ENCODE measurements at regions of chr2 and their contacts with region 1.

Region 1: GRCh38 chr2:74147727-74148456 is at the start of gene BOLA3:
- DNase-seq: peak; percentile 96
- H3K4me3 Mint-ChIP-seq: no peak within 1 kb of the TSS
- H3K27ac Mint-ChIP-seq: no peak within 1 kb of the TSS
- H3K4me1 Mint-ChIP-seq: peaks cover 2% of the 10 kb centered on the region
- H3K27me3 Mint-ChIP-seq: no peaks in the 10 kb centered on the region
- total RNA-seq, gene BOLA3: 100 and 103 TPM in 2 replicates

Region 2: GRCh38 chr2:73736855-73737779 is 410.8 kb before region 1 on chr2 and contains the start of gene TPRKB:
- intact Hi-C with region 1: loop called (anchors 10 kb)
- DNase-seq: peak; percentile 98
- H3K4me3 Mint-ChIP-seq: peak within 1 kb of the TSS; percentile 100
- H3K27ac Mint-ChIP-seq: peak within 1 kb of the TSS; percentile 91
- H3K4me1 Mint-ChIP-seq: peaks cover 10% of the 10 kb centered on the region
- H3K27me3 Mint-ChIP-seq: no peaks in the 10 kb centered on the region
- total RNA-seq, gene TPRKB: 37.6 and 38.5 TPM in 2 replicates

Region 3: DNA sequence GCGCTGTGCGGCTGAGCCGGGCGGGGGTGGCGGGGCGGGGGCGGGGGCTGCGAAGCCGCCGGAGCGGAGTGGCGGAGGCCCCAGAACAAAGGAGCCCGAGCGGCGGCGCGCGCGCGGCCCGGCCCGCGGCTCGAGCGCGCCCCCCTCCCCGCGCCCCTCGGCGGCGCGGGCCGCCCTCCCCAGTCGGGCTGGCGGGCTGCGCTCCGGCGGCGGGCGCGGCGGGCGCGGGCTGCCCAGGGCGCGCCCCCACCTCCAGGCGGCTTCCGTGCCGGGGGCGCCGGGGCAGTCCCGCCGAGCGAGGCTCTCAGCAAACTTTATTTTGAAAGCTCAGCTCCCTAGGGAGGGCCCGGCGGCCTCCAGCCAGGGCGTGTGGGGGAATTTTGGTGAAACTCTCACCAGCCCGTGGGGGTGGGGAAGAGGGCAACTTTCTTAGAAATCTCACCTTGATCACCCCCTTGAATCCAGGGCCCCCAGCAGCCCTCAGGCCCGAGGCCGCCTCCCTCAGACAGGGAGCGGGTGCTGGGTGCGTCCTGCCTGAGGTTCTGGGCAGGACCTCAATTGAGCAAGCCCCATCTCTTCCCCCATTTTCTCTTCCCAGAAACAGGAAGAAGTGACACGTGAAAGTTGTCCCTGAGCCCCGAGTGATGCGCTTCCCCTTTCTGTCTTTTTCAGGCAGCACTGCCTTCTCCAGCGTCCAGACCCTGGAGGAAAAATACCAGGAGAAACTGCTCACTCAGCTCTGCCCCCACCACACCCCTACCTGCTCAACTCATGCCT is 162.4 kb before region 1 on chr2:
- intact Hi-C with region 1: loop called (anchors 2 kb)
- DNase-seq: peak; percentile 83
- H3K4me3 Mint-ChIP-seq: peak overlapping the region; percentile 87
- H3K27ac Mint-ChIP-seq: peak overlapping the region; percentile 88
- H3K4me1 Mint-ChIP-seq: peaks cover 73% of the 10 kb centered on the region
- H3K27me3 Mint-ChIP-seq: peaks cover 9% of the 10 kb centered on the region

Region 4: GRCh38 chr2:74119912-74120825 is 27.7 kb before region 1 on chr2:
- intact Hi-C with region 1: loop called (anchors 2 kb)
- DNase-seq: peak; percentile 96
- H3K4me3 Mint-ChIP-seq: peak overlapping the region; percentile 88
- H3K27ac Mint-ChIP-seq: peak overlapping the region; percentile 92
- H3K4me1 Mint-ChIP-seq: peaks cover 9% of the 10 kb centered on the region
- H3K27me3 Mint-ChIP-seq: peaks cover 7% of the 10 kb centered on the region

Region 5: DNA sequence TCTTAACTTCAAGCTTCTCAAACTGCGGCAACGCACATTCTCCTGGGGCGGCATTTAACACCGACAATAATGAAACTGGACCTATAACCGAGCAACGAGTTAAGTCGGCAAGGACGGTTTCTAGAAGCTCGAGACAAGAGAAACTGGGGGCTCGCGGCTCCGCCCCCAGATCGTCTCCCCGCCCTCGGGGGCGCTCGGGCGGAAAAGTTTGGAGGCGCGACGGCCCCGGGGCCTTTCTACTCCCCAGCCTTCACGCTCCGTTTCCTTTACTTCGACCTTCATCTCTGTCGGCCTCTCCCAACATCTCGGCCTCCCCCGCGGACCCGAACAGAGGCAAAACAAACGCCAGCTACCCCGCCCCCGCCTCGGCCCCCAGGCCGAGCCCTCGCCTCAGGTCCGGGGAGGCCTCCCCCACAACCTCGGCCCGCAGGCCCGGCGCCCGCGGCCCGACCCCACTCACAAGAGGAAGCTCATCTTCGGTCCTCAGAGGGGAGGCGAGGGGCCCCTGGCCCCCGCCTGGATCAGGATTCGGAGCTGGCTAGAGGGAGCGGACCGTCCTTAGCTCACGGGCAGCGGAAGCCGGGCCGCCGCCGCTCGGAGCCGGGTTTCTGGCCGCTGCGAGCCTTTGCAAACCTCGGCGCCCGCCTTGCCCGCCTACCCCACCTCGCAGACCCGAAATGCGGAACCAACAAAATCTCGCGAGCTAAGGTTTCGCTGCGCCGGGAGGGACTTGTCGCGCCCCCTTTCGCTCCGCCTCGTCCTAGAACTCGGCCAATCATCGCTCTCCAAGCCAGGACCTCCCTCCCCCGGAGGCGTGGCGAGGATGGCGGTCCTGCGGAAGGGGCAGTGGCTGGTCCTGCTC is 30.5 kb after region 1 on chr2 and contains the start of gene MOB1A:
- intact Hi-C with region 1: loop called (anchors 1 kb)
- DNase-seq: peak; percentile 100
- H3K4me3 Mint-ChIP-seq: peak within 1 kb of the TSS; percentile 84
- H3K27ac Mint-ChIP-seq: peak within 1 kb of the TSS; percentile 90
- H3K4me1 Mint-ChIP-seq: peaks cover 43% of the 10 kb centered on the region
- H3K27me3 Mint-ChIP-seq: no peaks in the 10 kb centered on the region
- total RNA-seq, gene MOB1A: 203 and 204 TPM in 2 replicates

Region 6: GRCh38 chr2:74198461-74199274 is 50.8 kb after region 1 on chr2 and contains the start of gene MTHFD2:
- intact Hi-C with region 1: loop called (anchors 1 kb)
- DNase-seq: peak; percentile 98
- H3K4me3 Mint-ChIP-seq: peak within 1 kb of the TSS; percentile 96
- H3K27ac Mint-ChIP-seq: peak within 1 kb of the TSS; percentile 100
- H3K4me1 Mint-ChIP-seq: peaks cover 38% of the 10 kb centered on the region
- H3K27me3 Mint-ChIP-seq: no peaks in the 10 kb centered on the region
- total RNA-seq, gene MTHFD2: 418 and 439 TPM in 2 replicates

Region 7: GRCh38 chr2:74421221-74421870 is 273.5 kb after region 1 on chr2 and contains the starts of genes C2orf81 and WDR54:
- intact Hi-C with region 1: loop called (anchors 5 kb)
- DNase-seq: peak; percentile 99
- H3K4me3 Mint-ChIP-seq: peak within 1 kb of the TSS; percentile 94
- H3K27ac Mint-ChIP-seq: peak within 1 kb of the TSS; percentile 96
- H3K4me1 Mint-ChIP-seq: peaks cover 20% of the 10 kb centered on the region
- H3K27me3 Mint-ChIP-seq: peaks cover 2% of the 10 kb centered on the region
- total RNA-seq, gene C2orf81: 1.7 and 2.0 TPM in 2 replicates
- total RNA-seq, gene WDR54: 72.1 and 78.2 TPM in 2 replicates

Measured in activated CD4-positive, alpha-beta T cell treated with anti-CD3 and anti-CD28 coated beads, Interleukin-2, amount 10 ng/mL, durations not matched to agents 24 days and 14 days (primary cell).